Prostate gland (tissue), 2 donors: ENCODE measurements at regions of chr2 and their contacts with region 1.

Region 1: GRCh38 chr2:68751397-68752339 is 17.1 kb downstream of the ARHGAP25 start:
- DNase-seq: peak; percentile 89
- H3K4me3 ChIP-seq: no peak overlapping the region
- H3K27ac ChIP-seq: no peak overlapping the region
- H3K4me1 ChIP-seq: no peaks in the 10 kb centered on the region
- H3K27me3 ChIP-seq: no peaks in the 10 kb centered on the region
- CTCF ChIP-seq: peak; percentile 74 to 94 (median 91)
- POLR2A ChIP-seq: no peak

Region 2: DNA sequence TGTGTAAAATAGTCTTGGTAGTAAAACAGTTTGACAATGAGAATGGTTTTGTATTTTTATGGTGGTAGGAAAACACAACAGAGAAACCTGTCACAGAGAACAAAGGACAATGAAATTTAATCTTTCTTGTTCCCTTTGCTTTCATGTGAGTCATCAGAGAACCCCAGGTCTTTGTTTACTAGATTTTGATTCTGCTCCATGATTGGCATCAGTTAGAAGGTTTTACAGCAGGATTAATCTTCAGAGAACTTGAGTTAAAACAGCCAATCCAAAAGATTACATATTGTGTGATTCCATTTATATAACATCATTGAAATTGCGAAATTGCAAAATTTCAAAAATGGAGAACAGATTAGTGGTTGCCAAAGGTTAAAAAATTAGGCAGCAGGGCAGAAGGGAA is 281.7 kb before region 1 on chr2:
- intact Hi-C with region 1: no loop called
- DNase-seq: no peak
- H3K4me3 ChIP-seq: no peak overlapping the region
- H3K27ac ChIP-seq: no peak overlapping the region
- H3K4me1 ChIP-seq: peaks cover 3% of the 10 kb centered on the region
- H3K27me3 ChIP-seq: no peaks in the 10 kb centered on the region
- CTCF ChIP-seq: no peak
- POLR2A ChIP-seq: no peak

Region 3: DNA sequence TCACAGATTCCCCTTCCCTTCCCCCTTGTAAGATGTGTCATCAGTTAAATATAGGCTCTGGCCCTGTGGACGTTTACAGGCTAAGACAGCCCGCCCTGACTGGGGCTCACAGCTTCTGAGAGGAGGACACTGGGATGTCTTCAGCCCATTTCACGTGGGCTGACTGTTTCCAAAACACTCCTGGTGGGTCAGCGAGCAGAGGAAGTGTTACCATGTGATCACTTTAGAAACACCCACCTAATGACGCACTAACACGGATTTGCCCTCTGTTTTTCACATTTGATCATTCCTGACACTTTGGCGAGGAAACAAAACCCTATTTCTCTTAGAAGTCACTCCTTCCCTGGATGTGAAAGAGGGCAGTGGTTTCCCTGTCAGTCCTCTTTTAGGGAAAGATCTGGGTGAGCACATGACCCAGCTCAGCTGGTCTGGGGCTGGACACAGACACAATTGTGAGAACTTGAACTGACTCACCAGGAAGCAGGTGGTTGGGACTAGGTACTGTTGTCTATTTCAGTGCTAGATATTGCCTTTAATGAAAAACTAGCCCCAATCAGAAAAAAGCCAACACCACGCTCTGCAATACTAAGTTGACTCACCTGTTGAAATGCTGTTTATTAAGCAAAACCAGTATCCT is 80.7 kb after region 1 on chr2:
- intact Hi-C with region 1: loop called (anchors 10 kb)
- DNase-seq: no peak
- H3K4me3 ChIP-seq: no peak overlapping the region
- H3K27ac ChIP-seq: peak overlapping the region in 1 of 2 donors; percentile 29
- H3K4me1 ChIP-seq: peaks cover 4% of the 10 kb centered on the region
- H3K27me3 ChIP-seq: no peaks in the 10 kb centered on the region
- CTCF ChIP-seq: no peak
- POLR2A ChIP-seq: no peak

Region 4: DNA sequence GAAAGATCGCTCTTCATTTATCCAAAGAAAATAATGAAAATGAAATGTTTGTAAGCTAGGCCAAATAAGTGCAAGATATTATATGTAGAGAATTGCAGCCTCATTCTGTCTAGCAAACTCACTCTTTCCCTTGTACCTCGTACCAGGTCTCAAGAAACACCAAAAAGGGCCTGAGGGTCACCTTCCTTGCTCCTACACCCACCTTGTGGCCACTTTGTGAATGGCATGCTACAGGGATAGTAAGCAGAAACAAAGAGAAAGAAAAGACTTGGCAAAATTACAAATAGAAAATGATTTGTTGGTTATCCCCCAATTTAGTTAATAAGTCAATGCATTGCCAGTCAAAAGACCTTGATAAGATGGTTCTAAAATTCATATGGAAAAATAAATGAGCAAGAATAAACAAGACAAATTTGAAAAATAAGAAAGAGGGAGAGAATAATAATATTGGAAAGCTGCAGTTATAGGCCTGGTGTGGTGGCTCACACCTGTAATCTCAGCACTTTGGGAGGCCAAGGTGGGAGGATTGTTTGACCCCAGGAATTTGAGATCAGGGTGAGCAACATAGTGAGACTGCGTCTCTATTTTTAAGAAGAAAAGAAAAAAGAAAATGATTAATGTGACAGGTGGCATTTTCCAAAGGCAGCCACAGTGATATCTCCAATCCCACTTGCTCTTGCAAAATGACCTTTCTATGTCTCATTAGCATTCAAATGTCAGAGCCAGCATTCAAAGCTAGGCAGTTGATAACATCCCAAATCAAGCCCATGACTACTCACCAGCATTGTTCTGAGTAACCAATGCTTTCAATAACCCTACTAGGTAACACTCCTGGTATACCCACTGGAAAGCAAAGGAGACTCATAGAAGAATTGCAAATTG is 158.4 kb after region 1 on chr2:
- intact Hi-C with region 1: loop called (anchors 5 kb)
- DNase-seq: peak; percentile 69
- H3K4me3 ChIP-seq: no peak overlapping the region
- H3K27ac ChIP-seq: no peak overlapping the region
- H3K4me1 ChIP-seq: no peaks in the 10 kb centered on the region
- H3K27me3 ChIP-seq: no peaks in the 10 kb centered on the region
- CTCF ChIP-seq: peak; percentile 83 to 90 (median 85)
- POLR2A ChIP-seq: no peak

Region 5: DNA sequence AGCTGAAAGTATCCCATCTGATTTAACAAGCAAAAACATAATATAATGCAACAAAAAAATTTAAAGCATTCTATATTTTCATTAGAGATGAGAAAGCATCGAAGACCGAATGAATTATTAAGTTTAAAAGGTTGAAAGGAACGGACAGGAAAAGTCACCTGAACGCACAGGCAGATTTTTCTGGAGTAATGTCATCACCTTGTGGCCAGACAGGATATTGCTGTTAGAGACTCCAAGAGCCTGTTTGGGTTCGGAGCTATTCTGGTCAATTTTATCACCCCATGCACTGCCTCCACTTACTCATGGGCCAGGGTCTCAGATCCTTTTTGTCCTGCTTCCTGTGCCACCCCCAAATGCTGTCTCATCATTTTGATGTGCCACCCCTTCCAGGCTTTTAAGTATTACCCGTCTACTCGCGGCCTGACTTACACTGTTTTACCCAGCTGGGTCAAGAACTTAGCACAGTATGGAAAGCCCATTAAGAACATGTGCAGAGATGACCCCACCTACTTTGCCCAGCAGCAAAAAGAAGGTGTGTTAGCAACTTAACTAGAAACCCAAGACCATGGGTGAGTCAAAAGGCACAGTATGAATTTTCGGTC is 173.7 kb after region 1 on chr2:
- intact Hi-C with region 1: loop called (anchors 5 kb)
- DNase-seq: peak; percentile 40
- H3K4me3 ChIP-seq: no peak overlapping the region
- H3K27ac ChIP-seq: no peak overlapping the region
- H3K4me1 ChIP-seq: no peaks in the 10 kb centered on the region
- H3K27me3 ChIP-seq: no peaks in the 10 kb centered on the region
- CTCF ChIP-seq: peak; percentile 70 to 90 (median 79)
- POLR2A ChIP-seq: no peak